AG04450 (cell line): ENCODE measurements at regions of chr10 and their contacts with region 1.

Region 1: GRCh38 chr10:93006435-93007039 is 54.1 kb upstream of the CYP26C1 start:
- DNase-seq: peak; percentile 41
- H3K4me3 ChIP-seq: no peak overlapping the region
- H3K27ac ChIP-seq: no peak overlapping the region
- H3K27me3 ChIP-seq: no peaks in the 10 kb centered on the region
- CTCF ChIP-seq: peak; percentile 79

Region 2: GRCh38 chr10:92799591-92800446 is 206.7 kb before region 1 on chr10:
- CTCF ChIA-PET with region 1: no interaction called
- POLR2A ChIA-PET with region 1: no interaction called
- DNase-seq: no peak
- H3K4me3 ChIP-seq: no peak overlapping the region
- H3K27ac ChIP-seq: no peak overlapping the region
- H3K27me3 ChIP-seq: no peaks in the 10 kb centered on the region
- CTCF ChIP-seq: no peak

Region 3: GRCh38 chr10:92822060-92822634 is 184.4 kb before region 1 on chr10:
- CTCF ChIA-PET with region 1: no interaction called
- POLR2A ChIA-PET with region 1: no interaction called
- DNase-seq: peak; percentile 73
- H3K4me3 ChIP-seq: no peak overlapping the region
- H3K27ac ChIP-seq: peak overlapping the region; percentile 92
- H3K27me3 ChIP-seq: no peaks in the 10 kb centered on the region
- CTCF ChIP-seq: no peak

Region 4: DNA sequence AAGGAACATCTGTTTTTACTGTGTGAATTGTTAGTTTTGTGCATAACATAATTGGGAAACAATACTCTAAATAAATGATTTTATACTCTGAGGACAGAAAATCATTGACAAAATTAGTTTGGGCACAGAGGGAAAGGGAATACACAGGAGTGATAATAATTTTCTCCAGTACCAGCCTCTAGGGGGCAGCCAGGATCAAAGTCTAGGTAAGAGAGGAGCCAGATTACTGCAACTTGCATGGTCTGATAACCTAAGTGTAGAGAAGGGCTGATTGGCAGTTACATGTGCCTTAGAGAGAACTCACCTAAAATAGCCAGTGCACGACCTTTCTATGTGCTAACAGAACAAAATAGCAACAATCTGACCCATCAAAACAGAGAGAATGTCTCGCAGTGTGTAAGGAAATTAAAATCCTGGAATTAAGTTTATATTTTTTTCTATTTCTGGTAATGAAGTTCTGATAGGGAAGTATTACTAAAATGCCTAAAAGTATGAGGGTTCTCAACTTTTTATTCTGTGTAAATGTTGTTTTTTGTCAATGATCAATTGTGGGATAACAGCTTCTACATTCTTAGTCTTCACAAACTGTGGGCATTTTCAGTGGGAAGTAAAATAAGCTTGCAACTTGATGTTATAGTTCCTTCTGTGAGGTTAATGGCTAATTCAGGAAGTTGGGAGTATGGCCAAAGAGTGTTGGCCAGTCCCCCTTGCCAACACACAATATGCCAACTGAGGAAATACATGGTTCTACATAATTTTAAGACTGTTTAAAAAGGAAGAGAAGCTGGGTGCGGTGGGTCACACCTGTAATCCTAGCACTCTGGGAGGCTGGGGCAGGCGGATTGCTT is 91.8 kb before region 1 on chr10:
- CTCF ChIA-PET with region 1: interaction called, 10 read pairs
- POLR2A ChIA-PET with region 1: no interaction called
- DNase-seq: peak; percentile 7
- H3K4me3 ChIP-seq: no peak overlapping the region
- H3K27ac ChIP-seq: no peak overlapping the region
- H3K27me3 ChIP-seq: no peaks in the 10 kb centered on the region
- CTCF ChIP-seq: peak; percentile 82

Region 5: DNA sequence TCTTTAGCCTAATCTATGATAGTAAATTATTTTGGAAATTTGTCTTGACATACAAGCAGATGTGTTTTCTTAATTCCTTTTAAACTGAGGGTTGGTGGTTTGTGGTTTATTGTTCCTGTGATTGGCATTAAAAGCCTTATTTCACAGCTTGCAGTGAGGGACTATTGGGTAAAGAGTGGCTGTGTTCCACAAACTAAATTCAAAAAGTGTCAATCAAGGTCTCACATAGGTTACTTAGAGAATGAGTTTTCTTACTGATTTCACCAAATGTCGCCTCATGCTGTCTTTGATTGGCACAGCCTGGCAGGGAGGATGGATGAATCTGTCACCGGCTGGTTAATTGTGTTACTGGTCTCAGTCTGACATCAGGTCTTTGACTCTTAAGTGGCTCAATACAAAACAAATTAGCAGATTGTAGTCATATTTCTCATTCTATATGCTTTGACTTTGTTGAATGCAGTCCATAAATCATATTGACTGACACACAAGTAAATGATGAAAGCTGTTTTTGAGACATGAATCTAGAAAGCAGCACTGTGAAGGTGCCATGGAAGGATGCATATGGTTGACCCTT is 12.8 kb before region 1 on chr10:
- CTCF ChIA-PET with region 1: interaction called, 33 read pairs
- POLR2A ChIA-PET with region 1: no interaction called
- DNase-seq: no peak
- H3K4me3 ChIP-seq: no peak overlapping the region
- H3K27ac ChIP-seq: no peak overlapping the region
- H3K27me3 ChIP-seq: no peaks in the 10 kb centered on the region
- CTCF ChIP-seq: no peak

Region 6: GRCh38 chr10:93034426-93034825 is 27.9 kb after region 1 on chr10:
- CTCF ChIA-PET with region 1: interaction called, 39 read pairs
- POLR2A ChIA-PET with region 1: no interaction called
- DNase-seq: no peak
- H3K4me3 ChIP-seq: no peak overlapping the region
- H3K27ac ChIP-seq: no peak overlapping the region
- H3K27me3 ChIP-seq: no peaks in the 10 kb centered on the region
- CTCF ChIP-seq: no peak

Region 7: DNA sequence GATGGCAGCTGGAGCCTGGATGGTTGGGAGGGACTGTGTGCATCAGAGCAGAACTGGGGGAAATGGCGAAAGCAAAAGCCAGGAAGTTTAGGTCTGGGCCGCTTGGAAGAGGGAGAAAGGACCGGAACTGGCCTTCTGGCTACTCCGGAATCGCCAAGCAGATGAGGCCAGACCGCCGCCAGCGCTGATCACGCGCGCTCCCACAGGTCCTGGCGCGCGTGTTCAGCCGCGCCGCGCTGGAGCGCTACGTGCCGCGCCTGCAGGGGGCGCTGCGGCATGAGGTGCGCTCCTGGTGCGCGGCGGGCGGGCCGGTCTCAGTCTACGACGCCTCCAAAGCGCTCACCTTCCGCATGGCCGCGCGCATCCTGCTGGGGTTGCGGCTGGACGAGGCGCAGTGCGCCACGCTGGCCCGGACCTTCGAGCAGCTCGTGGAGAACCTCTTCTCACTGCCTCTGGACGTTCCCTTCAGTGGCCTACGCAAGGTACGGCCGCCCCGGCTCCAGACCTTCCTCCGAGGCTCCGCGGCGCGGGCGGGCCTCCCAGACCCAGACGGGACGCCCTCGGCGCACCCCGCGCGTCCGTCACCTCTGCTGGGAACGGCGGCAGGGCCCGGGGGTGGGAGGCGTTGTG is 56.1 kb after region 1 on chr10:
- CTCF ChIA-PET with region 1: interaction called, 15 read pairs
- POLR2A ChIA-PET with region 1: no interaction called
- DNase-seq: no peak
- H3K4me3 ChIP-seq: peak overlapping the region; percentile 53
- H3K27ac ChIP-seq: no peak overlapping the region
- H3K27me3 ChIP-seq: peaks cover 70% of the 10 kb centered on the region
- CTCF ChIP-seq: peak; percentile 47

Region 8: DNA sequence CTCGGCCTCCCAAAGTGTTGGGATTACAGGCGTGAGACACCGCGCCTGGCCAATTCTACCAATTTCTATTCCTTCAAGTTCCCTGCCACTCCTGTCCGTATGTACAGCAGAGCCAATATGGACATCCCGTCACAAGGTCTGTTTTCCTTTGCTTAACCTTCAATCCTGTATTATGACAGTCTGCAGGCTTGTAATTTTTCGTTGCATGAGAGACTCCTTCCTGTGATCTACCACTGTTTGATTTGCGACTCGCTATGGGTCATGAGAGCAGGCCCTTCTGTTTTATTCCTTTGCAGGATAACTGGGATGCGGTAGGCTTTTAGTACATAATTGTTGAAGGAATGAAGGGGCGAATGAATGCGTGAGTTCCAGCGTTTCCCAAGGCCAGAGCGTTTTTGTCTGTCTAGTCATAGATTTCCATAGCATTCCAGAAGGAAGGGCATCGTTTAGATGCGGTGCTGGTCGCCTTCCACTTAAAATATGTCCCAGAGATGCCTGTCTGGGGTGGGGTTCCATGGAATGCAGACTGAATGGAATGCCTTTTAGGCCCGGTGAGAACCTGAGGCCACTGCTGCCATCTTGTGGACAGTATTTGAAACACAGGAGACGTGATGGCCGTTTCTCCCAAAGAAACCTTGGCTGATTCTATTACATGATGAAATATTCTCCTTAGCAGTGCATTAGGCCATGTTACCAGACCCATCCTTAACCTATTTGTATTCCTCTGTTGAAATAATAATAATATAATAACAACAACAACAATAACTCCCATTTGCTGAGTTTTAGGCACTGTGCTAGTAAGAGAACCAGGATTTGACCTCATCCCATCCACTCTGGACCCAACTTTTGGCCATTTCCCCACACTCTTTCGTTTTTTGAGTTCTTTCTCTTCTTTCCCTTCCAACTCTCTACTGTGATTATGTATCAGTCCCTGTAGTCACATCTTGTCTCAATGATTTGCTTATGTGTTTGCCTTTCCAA is 282.4 kb after region 1 on chr10:
- CTCF ChIA-PET with region 1: interaction called, 10 read pairs
- POLR2A ChIA-PET with region 1: no interaction called
- DNase-seq: peak; percentile 66
- H3K4me3 ChIP-seq: no peak overlapping the region
- H3K27ac ChIP-seq: peak overlapping the region; percentile 65
- H3K27me3 ChIP-seq: no peaks in the 10 kb centered on the region
- CTCF ChIP-seq: peak; percentile 81

Region 9: DNA sequence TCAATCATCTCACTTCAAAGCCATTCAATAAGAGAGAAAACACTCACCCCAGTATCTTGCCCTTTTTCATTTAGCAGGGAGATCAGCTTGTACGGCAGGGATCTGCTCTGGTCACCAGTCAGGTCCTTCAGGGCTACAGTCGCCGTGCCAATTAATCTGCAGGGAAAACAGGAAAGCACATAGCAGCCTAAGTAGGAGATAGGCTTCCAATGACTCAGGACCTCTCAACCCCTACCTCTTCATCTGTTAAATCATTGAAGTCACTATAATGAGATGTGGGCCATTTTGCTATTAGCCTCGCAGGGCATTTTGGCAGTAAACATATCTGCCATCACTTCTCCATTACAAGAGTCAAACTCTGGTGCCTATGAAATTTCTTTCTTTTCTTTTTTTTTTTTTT is 424.8 kb after region 1 on chr10:
- CTCF ChIA-PET with region 1: no interaction called
- POLR2A ChIA-PET with region 1: no interaction called
- DNase-seq: no peak
- H3K4me3 ChIP-seq: no peak overlapping the region
- H3K27ac ChIP-seq: no peak overlapping the region
- H3K27me3 ChIP-seq: no peaks in the 10 kb centered on the region
- CTCF ChIP-seq: no peak